ENCODE measurements at regions of chr16 and their contacts with region 1.

Region 1: GRCh38 chr16:75206749-75207451 is at the start of gene CTRB2:
- DNase-seq: no peak
- ATAC-seq: no peak
- H3K4me3 ChIP-seq: no peak within 1 kb of the TSS
- H3K27ac ChIP-seq: no peak within 1 kb of the TSS
- H3K4me1 ChIP-seq: peaks cover 0 to 15% of the 10 kb centered on the region in 2 experiments; a peak in 2 of 5 replicates
- H3K27me3 ChIP-seq: peaks cover 34 to 76% of the 10 kb centered on the region in 2 experiments
- CTCF ChIP-seq: no peak
- EP300 ChIP-seq: no peak
- POLR2A ChIP-seq: no peak
- RAD21 ChIP-seq: no peak
- polyA plus RNA-seq, gene CTRB2: not detected

Region 2: GRCh38 chr16:75224306-75225091 is 17.6 kb after region 1 on chr16:
- CTCF ChIA-PET with region 1: no interaction called
- POLR2A ChIA-PET with region 1: interaction called, 5 read pairs
- in situ Hi-C with region 1: no loop called
- intact Hi-C with region 1: loop called (anchors 2 kb)
- DNase-seq: no peak
- ATAC-seq: peak; percentile 56
- H3K4me3 ChIP-seq: no peak overlapping the region
- H3K27ac ChIP-seq: no peak overlapping the region
- H3K4me1 ChIP-seq: peaks cover 0 to 22% of the 10 kb centered on the region in 2 experiments; a peak in 1 of 5 replicates
- H3K27me3 ChIP-seq: peaks cover 8 to 13% of the 10 kb centered on the region in 2 experiments; a peak in 3 of 5 replicates
- CTCF ChIP-seq: 0 out of 6 replicates have a peak, but pooled peaks have one; percentile 11 to 21 (median 19)
- EP300 ChIP-seq: no peak
- POLR2A ChIP-seq: no peak
- RAD21 ChIP-seq: peak in 1 of 2 experiments; percentile 43; a peak in 2 of 4 replicates

Region 3: GRCh38 chr16:75385507-75386152 is 178.7 kb after region 1 on chr16:
- CTCF ChIA-PET with region 1: no interaction called
- POLR2A ChIA-PET with region 1: no interaction called
- in situ Hi-C with region 1: loop called (anchors 5 kb)
- intact Hi-C with region 1: no loop called
- DNase-seq: peak; percentile 39 to 85 (median 45)
- ATAC-seq: peak; percentile 67
- H3K4me3 ChIP-seq: no peak overlapping the region
- H3K27ac ChIP-seq: no peak overlapping the region
- H3K4me1 ChIP-seq: peaks cover 0 to 3% of the 10 kb centered on the region in 2 experiments; a peak in 1 of 5 replicates
- H3K27me3 ChIP-seq: no peaks in the 10 kb centered on the region
- CTCF ChIP-seq: peak in 2 of 3 experiments; percentile 48 to 76; a peak in 4 of 6 replicates
- EP300 ChIP-seq: no peak
- POLR2A ChIP-seq: no peak
- RAD21 ChIP-seq: peak; percentile 94

Measured in K562 (cell line).